CD14-positive monocyte (primary cell): ENCODE measurements at regions of chr1 and their contacts with region 1.

Region 1: DNA sequence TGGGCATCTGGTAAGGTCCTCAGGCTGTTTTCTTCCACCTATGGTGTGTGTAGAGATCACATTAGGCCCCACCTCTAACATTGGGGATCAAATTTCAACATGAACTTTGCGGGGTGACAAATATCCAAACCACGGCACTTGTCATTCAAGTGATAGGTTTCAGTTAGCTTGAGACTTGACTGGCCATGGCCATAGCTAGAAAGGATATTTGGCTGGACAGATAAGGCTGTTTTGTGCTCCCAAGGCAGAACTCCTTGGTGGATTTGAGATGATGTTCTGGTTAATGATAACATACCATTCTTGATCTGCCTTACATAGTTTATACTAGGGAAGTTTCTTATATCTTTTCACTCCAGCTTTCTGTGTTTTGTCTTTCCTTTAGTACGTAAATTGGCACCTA is 48.5 kb downstream of the CELF3 start:
- DNase-seq: no peak
- H3K4me3 ChIP-seq: no peak overlapping the region
- H3K4me3 Mint-ChIP-seq: no peak overlapping the region
- H3K27ac ChIP-seq: peak overlapping the region in 1 of 2 donors; percentile 43
- H3K27ac Mint-ChIP-seq: peak overlapping the region in 2 of 7 donors; percentile 4 to 51
- H3K4me1 ChIP-seq: peaks cover 14 to 26% of the 10 kb centered on the region in 2 donors
- H3K4me1 Mint-ChIP-seq: peaks cover 41% of the 10 kb centered on the region
- H3K27me3 ChIP-seq: no peaks in the 10 kb centered on the region
- H3K27me3 Mint-ChIP-seq: no peaks in the 10 kb centered on the region
- CTCF ChIP-seq: no peak

Region 2: GRCh38 chr1:151619489-151620093 is 48.5 kb before region 1 on chr1:
- intact Hi-C with region 1: loop called in 1 of 2 experiments (anchors 5 kb)
- DNase-seq: peak; percentile 33 to 66 (median 66)
- H3K4me3 ChIP-seq: peak overlapping the region in 1 of 3 experiments; percentile 63
- H3K4me3 Mint-ChIP-seq: peak overlapping the region; percentile 47 to 54
- H3K27ac ChIP-seq: peak overlapping the region; percentile 68 to 79
- H3K27ac Mint-ChIP-seq: peak overlapping the region; percentile 85 to 94 (median 89)
- H3K4me1 ChIP-seq: peaks cover 62 to 72% of the 10 kb centered on the region in 2 donors
- H3K4me1 Mint-ChIP-seq: peaks cover 65% of the 10 kb centered on the region
- H3K27me3 ChIP-seq: no peaks in the 10 kb centered on the region
- H3K27me3 Mint-ChIP-seq: peaks cover 0 to 2% (median 0%) of the 10 kb centered on the region in 3 donors
- CTCF ChIP-seq: no peak

Region 3: GRCh38 chr1:151773702-151774101 is 105.6 kb after region 1 on chr1:
- intact Hi-C with region 1: no loop called
- DNase-seq: no peak
- H3K4me3 ChIP-seq: no peak overlapping the region
- H3K4me3 Mint-ChIP-seq: no peak overlapping the region
- H3K27ac ChIP-seq: no peak overlapping the region
- H3K27ac Mint-ChIP-seq: no peak overlapping the region
- H3K4me1 ChIP-seq: no peaks in the 10 kb centered on the region
- H3K4me1 Mint-ChIP-seq: no peaks in the 10 kb centered on the region
- H3K27me3 ChIP-seq: no peaks in the 10 kb centered on the region
- H3K27me3 Mint-ChIP-seq: peaks cover 2 to 4% (median 3%) of the 10 kb centered on the region in 3 donors
- CTCF ChIP-seq: no peak